ENCODE measurements at regions of chr1 and their contacts with region 1.

Region 1: DNA sequence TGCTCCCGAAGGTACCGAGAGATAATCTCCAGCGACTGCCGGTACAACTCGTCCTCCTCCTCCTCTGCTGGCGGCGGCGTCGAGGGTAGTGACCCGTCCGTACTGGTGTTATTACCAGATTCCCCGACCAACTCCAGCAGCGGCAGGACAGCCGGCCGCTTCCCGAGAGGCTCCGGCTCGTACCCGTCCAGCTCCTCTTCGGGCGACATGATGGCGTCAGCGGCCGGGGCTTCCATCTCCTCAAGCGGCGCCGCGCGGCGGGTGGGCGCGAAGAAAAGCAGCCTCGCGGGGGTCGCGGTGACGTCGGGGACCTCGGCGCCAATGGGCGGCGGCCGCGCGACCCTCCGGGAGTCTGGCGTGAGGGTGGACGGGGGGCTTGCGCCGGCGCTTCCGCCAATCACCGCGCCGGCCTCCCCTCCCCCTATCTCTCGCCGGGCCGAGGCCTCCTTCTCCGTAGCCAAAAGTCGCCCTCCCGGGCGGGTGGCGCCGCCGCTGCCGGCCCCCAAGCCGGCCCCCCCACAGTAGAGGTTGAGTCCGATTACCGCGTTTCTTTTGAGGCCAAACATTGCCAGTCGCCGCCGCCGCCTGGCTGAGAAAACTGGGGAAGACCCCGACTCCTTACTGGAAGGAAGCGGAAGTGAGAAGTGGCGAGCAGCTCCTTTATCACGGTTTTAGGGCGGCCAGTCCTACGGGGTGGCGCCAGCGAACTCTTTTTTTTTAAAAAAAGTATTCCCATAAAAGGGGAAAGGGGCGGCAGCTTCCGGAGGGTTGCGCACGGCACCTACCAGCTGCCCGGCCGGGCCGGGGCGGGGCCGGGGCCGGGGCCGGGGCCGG is at the start of gene MCL1:
- DNase-seq: peak; percentile 93
- ATAC-seq: peak; percentile 88
- H3K4me3 ChIP-seq: peak within 1 kb of the TSS; percentile 93 to 96 (median 94)
- H3K27ac ChIP-seq: peak within 1 kb of the TSS; percentile 92
- H3K4me1 ChIP-seq: peaks cover 39% of the 10 kb centered on the region
- H3K27me3 ChIP-seq: no peaks in the 10 kb centered on the region; a peak in 1 of 5 replicates
- CTCF ChIP-seq: 0 out of 2 replicates have a peak, but pooled peaks have one; percentile 6
- EP300 ChIP-seq: no peak; a peak in 1 of 4 replicates
- POLR2A ChIP-seq: peak; percentile 95 to 99
- RAD21 ChIP-seq: peak; percentile 57
- total RNA-seq, gene MCL1: 113 and 125 TPM in 2 replicates

Region 2: GRCh38 chr1:150561974-150562445 is 17.2 kb before region 1 on chr1:
- CTCF ChIA-PET with region 1: interaction called, 4 read pairs
- POLR2A ChIA-PET with region 1: interaction called, 469 read pairs
- in situ Hi-C with region 1: no loop called
- intact Hi-C with region 1: loop called (anchors 1 kb)
- DNase-seq: peak; percentile 77
- ATAC-seq: peak; percentile 72
- H3K4me3 ChIP-seq: peak overlapping the region; percentile 72 to 80 (median 73)
- H3K27ac ChIP-seq: peak overlapping the region; percentile 91
- H3K4me1 ChIP-seq: peaks cover 51% of the 10 kb centered on the region
- H3K27me3 ChIP-seq: no peaks in the 10 kb centered on the region
- CTCF ChIP-seq: no peak
- EP300 ChIP-seq: peak in 1 of 2 experiments; percentile 96; a peak in 2 of 4 replicates
- POLR2A ChIP-seq: peak; percentile 46 to 65; a peak in 2 of 4 replicates
- RAD21 ChIP-seq: 0 out of 2 replicates have a peak, but pooled peaks have one; percentile 4

Region 3: GRCh38 chr1:150596095-150596892 is 17.1 kb after region 1 on chr1:
- CTCF ChIA-PET with region 1: no interaction called
- POLR2A ChIA-PET with region 1: interaction called, 27 read pairs
- in situ Hi-C with region 1: no loop called
- intact Hi-C with region 1: no loop called
- DNase-seq: no peak
- ATAC-seq: no peak
- H3K4me3 ChIP-seq: no peak overlapping the region
- H3K27ac ChIP-seq: no peak overlapping the region
- H3K4me1 ChIP-seq: peaks cover 46% of the 10 kb centered on the region
- H3K27me3 ChIP-seq: no peaks in the 10 kb centered on the region
- CTCF ChIP-seq: no peak
- EP300 ChIP-seq: no peak
- POLR2A ChIP-seq: no peak
- RAD21 ChIP-seq: no peak

Region 4: DNA sequence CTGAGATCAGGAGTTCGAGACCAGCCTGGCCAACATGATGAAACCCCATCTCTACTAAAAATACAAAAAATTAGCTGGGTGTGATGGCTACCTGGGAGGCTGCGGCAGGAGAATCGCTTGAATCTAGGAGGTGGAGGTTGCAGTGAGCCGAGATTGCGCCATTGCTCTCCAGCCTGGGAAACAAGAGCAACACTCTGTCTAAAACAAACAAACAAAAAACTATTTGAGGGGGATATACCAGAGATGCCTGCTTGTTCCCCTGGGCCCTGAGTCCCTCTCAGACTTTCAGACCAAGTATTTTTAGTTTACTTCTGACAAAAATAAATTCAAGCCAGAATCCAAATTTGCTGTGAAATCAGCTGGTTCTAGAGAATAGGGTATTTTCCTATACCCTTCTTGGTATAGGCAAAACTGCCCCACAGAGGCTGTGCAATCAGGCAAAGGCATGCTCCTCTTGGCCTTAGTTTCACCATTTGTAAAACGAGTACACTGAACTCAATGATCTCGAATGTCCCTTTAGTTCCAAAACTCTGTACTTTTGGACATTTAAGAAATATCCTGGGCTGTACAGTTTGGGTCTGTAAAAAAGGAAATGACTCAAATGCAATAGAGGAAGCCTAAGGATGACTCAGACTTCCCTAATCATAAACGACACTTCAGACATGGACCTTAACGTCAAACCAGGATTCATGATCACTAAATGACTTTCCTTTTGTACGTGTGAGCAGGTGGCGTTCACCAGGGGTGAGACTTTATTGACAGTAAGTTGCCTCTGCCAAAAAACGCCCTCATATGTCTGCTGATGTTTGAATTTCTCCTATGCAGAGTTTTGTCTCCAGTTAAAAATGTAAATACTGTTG is 34.1 kb after region 1 on chr1:
- CTCF ChIA-PET with region 1: no interaction called
- POLR2A ChIA-PET with region 1: interaction called, 40 read pairs
- in situ Hi-C with region 1: no loop called
- intact Hi-C with region 1: loop called (anchors 5 kb)
- DNase-seq: peak; percentile 79
- ATAC-seq: peak; percentile 16
- H3K4me3 ChIP-seq: peak overlapping the region in 1 of 3 experiments; percentile 24; a peak in 1 of 6 replicates
- H3K27ac ChIP-seq: peak overlapping the region; percentile 95
- H3K4me1 ChIP-seq: peaks cover 58% of the 10 kb centered on the region
- H3K27me3 ChIP-seq: no peaks in the 10 kb centered on the region
- CTCF ChIP-seq: no peak
- EP300 ChIP-seq: peak in 1 of 2 experiments; percentile 64; a peak in 2 of 4 replicates
- POLR2A ChIP-seq: no peak
- RAD21 ChIP-seq: no peak

Region 5: GRCh38 chr1:150629115-150629928 is 50.1 kb after region 1 on chr1 and contains the start of gene ENSA:
- CTCF ChIA-PET with region 1: no interaction called
- POLR2A ChIA-PET with region 1: interaction called, 92 read pairs
- in situ Hi-C with region 1: no loop called
- intact Hi-C with region 1: no loop called
- DNase-seq: peak; percentile 99
- ATAC-seq: peak; percentile 96
- H3K4me3 ChIP-seq: peak within 1 kb of the TSS; percentile 72 to 79 (median 76)
- H3K27ac ChIP-seq: peak within 1 kb of the TSS; percentile 90
- H3K4me1 ChIP-seq: peaks cover 25% of the 10 kb centered on the region
- H3K27me3 ChIP-seq: no peaks in the 10 kb centered on the region; a peak in 1 of 5 replicates
- CTCF ChIP-seq: no peak
- EP300 ChIP-seq: 0 out of 4 replicates have a peak, but pooled peaks of 1 of the 2 experiments have one; percentile 28
- POLR2A ChIP-seq: peak; percentile 70 to 72
- RAD21 ChIP-seq: no peak
- total RNA-seq, gene ENSA: 111 and 137 TPM in 2 replicates

Region 6: DNA sequence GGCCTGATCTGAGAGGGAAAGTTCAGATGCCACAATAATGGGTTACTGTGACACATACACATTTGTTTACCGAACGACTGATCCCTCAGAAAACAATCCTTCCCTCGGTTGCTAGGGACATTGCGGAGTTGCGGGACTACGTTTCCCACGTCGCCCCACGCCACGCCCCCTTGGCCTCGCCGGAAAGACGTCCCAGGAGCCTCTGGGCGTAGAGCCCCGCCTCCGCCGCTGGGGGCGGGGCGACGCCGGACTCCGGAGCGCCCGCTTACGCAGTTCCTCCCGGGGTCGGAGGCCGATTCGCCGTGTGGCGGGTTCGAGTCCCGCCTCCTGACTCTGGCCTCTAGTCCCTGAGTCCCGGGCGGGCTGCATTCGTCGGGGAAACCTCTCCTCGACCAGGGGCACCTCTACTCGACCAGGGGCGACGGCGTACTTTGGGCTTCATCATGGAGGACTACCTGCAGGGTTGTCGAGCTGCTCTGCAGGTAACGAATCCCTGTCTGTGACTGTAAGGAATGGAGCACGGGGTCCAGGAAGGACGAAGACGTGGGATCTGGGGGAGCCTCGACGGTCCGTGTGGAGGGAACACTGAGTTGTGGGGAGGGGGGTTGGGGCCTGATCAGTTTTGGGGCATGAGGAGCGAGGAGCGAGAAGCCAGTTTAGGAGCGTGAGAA is 429.1 kb after region 1 on chr1 and contains the start of gene PRUNE1:
- CTCF ChIA-PET with region 1: no interaction called
- POLR2A ChIA-PET with region 1: interaction called, 12 read pairs
- in situ Hi-C with region 1: no loop called
- intact Hi-C with region 1: no loop called
- DNase-seq: peak; percentile 95
- ATAC-seq: peak; percentile 55
- H3K4me3 ChIP-seq: peak within 1 kb of the TSS; percentile 66 to 99 (median 91)
- H3K27ac ChIP-seq: peak within 1 kb of the TSS; percentile 100
- H3K4me1 ChIP-seq: peaks cover 77% of the 10 kb centered on the region
- H3K27me3 ChIP-seq: no peaks in the 10 kb centered on the region; a peak in 1 of 5 replicates
- CTCF ChIP-seq: no peak
- EP300 ChIP-seq: peak in 1 of 2 experiments; percentile 39; a peak in 2 of 4 replicates
- POLR2A ChIP-seq: peak; percentile 32 to 77
- RAD21 ChIP-seq: 0 out of 2 replicates have a peak, but pooled peaks have one; percentile 4
- total RNA-seq, gene PRUNE1: 19.0 and 26.2 TPM in 2 replicates

Measured in HepG2 (cell line).